Dorsolateral prefrontal cortex (tissue), 120 donors: ENCODE measurements at regions of chr2 and their contacts with region 1.

Region 1: DNA sequence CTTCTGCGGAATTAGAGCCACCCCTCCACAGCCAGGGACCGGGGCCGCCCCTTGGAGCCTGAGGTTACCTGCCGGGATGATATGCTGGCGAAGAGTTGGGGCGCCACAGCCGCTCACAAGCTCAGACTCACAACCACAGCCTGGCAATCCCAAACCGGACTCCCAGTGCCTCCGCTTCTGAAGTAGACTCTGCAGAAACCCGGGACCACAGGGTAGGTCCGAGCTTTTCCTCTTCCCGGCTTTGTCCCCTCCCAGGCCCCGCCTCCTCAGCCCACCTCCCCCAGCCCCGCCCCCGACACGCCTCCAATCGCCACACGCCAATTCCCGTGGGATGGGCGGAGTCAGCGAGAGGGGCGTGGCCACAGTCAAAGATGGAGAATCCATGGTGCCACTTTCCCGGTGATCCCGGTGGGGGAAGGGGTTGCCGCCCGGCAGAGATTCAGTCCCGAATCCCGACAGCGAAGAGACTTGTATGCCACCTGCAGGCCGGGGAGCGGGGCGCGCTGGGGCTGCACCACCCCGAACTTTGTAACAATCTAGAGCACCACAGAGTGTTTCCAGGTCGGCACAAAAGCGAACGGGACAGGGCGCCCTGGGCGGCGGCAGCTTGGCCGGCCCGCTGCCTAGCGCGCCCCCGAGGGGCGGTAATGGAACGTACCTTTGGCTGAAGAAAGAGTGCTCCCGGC is at the start of gene IDH1:
- DNase-seq: peak; percentile 94 to 98 (median 97)
- H3K4me3 ChIP-seq: peak within 1 kb of the TSS; percentile 52 to 99 (median 89)
- H3K27ac ChIP-seq: peak within 1 kb of the TSS; percentile 30 to 95 (median 87)
- H3K27me3 ChIP-seq: no peaks in the 10 kb centered on the region
- CTCF ChIP-seq: peak; percentile 19 to 76 (median 56)
- total RNA-seq, gene IDH1: 20.5 to 54.5 (median 29.5) TPM

Region 2: DNA sequence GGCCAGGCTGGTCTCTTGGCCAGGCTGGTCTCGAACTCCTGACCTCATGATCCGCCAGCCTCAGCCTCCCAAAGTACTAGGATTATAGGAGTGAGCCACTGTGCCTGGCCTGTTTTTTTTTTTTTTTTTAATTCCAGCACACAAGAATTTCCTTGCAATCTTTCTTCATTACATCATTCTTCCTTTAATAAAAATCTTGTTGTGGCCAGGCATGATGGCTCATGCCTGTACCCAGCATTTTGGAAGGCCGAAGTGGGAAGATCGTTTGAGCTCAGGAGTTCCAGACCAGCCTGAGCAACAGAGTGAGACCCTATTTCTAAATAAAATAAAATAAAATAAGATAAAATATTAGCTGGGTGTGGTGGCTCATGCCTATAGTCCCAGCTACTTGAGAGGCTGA is 208.3 kb before region 1 on chr2:
- intact Hi-C with region 1: no loop called
- DNase-seq: no peak
- H3K4me3 ChIP-seq: no peak overlapping the region
- H3K27ac ChIP-seq: no peak overlapping the region
- H3K27me3 ChIP-seq: no peaks in the 10 kb centered on the region
- CTCF ChIP-seq: no peak

Region 3: GRCh38 chr2:208101716-208102631 is 153.0 kb before region 1 on chr2:
- intact Hi-C with region 1: loop called (anchors 5 to 10 kb)
- DNase-seq: peak in 1 of 10 donors; percentile 22
- H3K4me3 ChIP-seq: no peak overlapping the region
- H3K27ac ChIP-seq: no peak overlapping the region
- H3K27me3 ChIP-seq: no peaks in the 10 kb centered on the region
- CTCF ChIP-seq: peak in 51 of 56 donors; percentile 10 to 74 (median 44)

Region 4: DNA sequence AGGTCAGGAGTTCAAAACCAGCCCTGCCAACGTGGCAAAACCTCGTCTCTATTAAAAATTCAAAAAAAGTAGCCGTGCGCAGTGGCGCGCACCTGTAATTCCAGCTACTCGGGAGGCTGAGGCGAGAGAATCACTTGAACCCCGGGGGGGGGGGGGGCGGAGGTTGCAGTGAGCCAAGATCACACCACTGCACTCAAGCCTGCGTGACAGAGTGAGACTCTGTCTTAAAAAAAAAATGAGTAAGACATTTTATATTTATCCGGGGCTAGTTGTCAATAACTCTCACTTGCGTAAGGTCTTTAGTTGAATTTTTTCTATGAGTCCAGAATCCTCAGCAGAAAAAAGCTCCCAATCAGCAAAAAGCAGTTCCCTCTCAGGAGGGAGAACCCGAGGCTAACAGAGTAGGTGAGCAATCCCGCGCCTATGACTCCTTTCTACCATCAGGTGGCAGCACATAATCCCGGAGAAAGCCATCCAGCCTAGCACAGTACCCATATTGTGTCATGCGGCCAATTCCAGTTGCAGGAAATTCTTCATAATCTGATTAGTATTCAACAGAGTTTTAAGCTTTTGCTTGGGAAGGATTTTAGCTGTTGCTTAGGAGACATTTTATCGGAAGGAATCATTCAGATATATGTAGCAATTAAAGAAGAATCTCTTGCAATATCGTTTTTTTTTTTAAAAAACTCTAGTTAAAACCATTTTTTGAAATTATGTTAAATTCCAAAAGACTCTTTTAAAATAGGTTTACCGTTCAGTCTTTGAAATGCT is 79.8 kb before region 1 on chr2:
- intact Hi-C with region 1: loop called (anchors 2 kb)
- DNase-seq: peak; percentile 47 to 91 (median 78)
- H3K4me3 ChIP-seq: peak overlapping the region in 28 of 59 donors; percentile 0 to 44 (median 14)
- H3K27ac ChIP-seq: peak overlapping the region in 20 of 59 donors; percentile 0 to 52 (median 26)
- H3K27me3 ChIP-seq: no peaks in the 10 kb centered on the region
- CTCF ChIP-seq: peak; percentile 79 to 96 (median 92)

Region 5: DNA sequence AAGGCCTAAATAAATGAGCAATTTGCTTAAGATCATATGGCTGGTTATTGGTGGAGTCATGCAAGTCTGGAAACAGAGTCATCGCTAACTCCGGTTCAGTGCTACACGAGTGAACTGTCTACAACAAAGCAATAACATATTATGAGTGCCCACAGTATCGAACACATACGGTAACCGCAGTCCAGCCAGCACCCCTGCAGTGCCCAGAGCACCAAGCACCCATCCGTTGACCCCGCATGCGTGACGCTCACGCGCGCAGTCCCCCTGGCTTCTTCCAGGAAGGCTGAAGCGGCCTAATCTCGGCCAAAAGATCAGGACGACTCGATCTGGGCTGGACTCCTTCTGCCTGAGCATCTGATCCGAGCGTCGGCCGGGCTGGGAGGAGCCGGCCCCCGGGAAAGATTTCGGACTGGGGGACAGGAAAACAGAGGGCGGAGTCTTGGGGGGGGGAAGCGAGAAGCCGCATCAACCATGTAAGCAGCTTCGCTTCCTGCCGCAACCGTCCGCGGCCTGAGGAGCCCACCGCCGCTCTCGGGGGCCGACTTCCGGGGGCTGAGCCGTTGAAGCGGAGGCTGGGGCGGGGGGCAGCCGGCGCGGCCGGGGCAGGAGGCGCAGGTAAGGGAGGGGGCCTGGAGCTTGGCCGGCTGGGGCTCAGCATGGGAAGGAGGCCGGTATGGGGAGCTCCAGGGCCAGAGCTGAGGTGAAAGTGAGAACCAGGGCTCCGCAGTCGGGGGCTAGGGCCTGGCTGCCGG is 11.0 kb after region 1 on chr2 and contains the start of gene PIKFYVE:
- intact Hi-C with region 1: loop called in 1 of 2 experiments (anchors 1 kb)
- DNase-seq: peak; percentile 96 to 99 (median 98)
- H3K4me3 ChIP-seq: peak within 1 kb of the TSS; percentile 79 to 100 (median 96)
- H3K27ac ChIP-seq: peak within 1 kb of the TSS; percentile 56 to 98 (median 91)
- H3K27me3 ChIP-seq: no peaks in the 10 kb centered on the region
- CTCF ChIP-seq: peak in 31 of 56 donors; percentile 5 to 55 (median 19)
- total RNA-seq, gene PIKFYVE: 45.3 to 68.9 (median 55.6) TPM

Region 6: GRCh38 chr2:208278549-208278948 is 23.5 kb after region 1 on chr2:
- intact Hi-C with region 1: no loop called
- DNase-seq: no peak
- H3K4me3 ChIP-seq: no peak overlapping the region
- H3K27ac ChIP-seq: no peak overlapping the region
- H3K27me3 ChIP-seq: no peaks in the 10 kb centered on the region
- CTCF ChIP-seq: no peak

Region 7: GRCh38 chr2:208373460-208374089 is 118.6 kb after region 1 on chr2:
- intact Hi-C with region 1: loop called in 1 of 2 experiments (anchors 5 kb)
- DNase-seq: peak in 2 of 10 donors; percentile 22 to 57
- H3K4me3 ChIP-seq: no peak overlapping the region
- H3K27ac ChIP-seq: no peak overlapping the region
- H3K27me3 ChIP-seq: no peaks in the 10 kb centered on the region
- CTCF ChIP-seq: peak; percentile 60 to 94 (median 82)

Region 8: GRCh38 chr2:209476367-209477191 is 1221.6 kb after region 1 on chr2:
- intact Hi-C with region 1: no loop called
- DNase-seq: peak in 6 of 10 donors; percentile 39 to 64 (median 59)
- H3K4me3 ChIP-seq: peak overlapping the region in 4 of 59 donors; percentile 8 to 16 (median 11)
- H3K27ac ChIP-seq: no peak overlapping the region
- H3K27me3 ChIP-seq: no peaks in the 10 kb centered on the region
- CTCF ChIP-seq: no peak